Cardiac septum (tissue), 1 donor: ENCODE measurements at regions of chr3 and their contacts with region 1.

Region 1: DNA sequence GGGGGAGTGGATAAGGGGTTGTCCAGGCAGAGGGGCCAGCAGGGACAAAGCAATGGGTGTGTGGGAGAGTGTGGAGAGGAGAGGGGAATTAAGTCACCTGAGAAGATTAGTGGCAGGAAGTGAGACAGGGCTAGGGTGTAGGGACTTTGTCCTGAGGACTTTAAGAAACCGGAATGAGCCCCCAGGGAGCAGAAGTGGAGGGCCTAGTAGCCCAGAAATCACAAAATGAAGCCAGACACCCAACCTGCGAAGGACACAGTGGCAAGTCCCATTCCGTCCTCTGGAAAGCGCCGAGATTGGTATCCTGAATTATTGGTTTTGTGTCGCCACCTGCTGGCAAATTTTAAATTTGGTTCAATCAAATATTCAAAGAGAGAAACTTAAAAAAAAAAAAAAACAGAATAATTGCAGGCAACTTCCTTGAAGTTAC is 78.0 kb upstream of the SLC25A36 start:
- DNase-seq: no peak

Region 2: DNA sequence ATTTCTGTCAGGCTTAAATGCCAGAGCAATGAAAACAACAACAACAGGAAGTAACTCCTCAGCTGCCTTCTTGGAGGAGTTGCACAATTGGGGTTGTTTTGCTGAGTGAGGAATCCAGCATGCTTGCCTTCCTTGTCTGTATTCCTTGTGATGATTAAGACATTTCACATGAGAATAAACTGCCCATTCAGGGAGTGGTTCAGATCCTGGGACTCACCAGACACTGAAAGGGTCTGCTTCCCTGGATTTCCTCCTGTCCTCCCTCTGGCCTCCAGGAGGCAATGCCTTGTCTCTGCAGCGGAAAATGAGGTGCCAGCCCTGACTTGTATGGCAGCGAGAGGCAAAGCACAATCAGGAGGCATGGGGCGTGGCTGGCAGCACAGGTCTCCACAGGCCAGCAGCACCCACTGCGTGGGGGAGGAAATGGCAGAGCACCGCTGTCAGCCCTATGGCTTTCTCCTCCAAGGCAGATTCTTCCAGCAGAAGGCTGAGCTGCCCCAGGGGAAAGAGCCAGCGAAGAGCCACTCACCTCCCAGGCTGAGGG is 1428.8 kb before region 1 on chr3:
- intact Hi-C with region 1: loop called (anchors 10 kb)
- DNase-seq: no peak

Region 3: GRCh38 chr3:140719841-140720614 is 143.6 kb before region 1 on chr3:
- intact Hi-C with region 1: no loop called
- DNase-seq: no peak